AG04450 (cell line): ENCODE measurements at regions of chr15 and their contacts with region 1.

Region 1: GRCh38 chr15:90221246-90221900 is 12.4 kb downstream of the CIB1 start:
- DNase-seq: peak; percentile 53
- H3K4me3 ChIP-seq: no peak overlapping the region
- H3K27ac ChIP-seq: peak overlapping the region; percentile 39
- H3K27me3 ChIP-seq: no peaks in the 10 kb centered on the region
- CTCF ChIP-seq: peak; percentile 90

Region 2: GRCh38 chr15:90101969-90102890 is 119.1 kb before region 1 on chr15 and contains the start of gene IDH2:
- CTCF ChIA-PET with region 1: interaction called, 12 read pairs
- POLR2A ChIA-PET with region 1: interaction called, 5 read pairs
- DNase-seq: peak; percentile 42
- H3K4me3 ChIP-seq: peak within 1 kb of the TSS; percentile 73
- H3K27ac ChIP-seq: peak within 1 kb of the TSS; percentile 71
- H3K27me3 ChIP-seq: no peaks in the 10 kb centered on the region
- CTCF ChIP-seq: no peak
- polyA plus RNA-seq, gene IDH2: 84.2 and 108 TPM in 2 replicates

Region 3: DNA sequence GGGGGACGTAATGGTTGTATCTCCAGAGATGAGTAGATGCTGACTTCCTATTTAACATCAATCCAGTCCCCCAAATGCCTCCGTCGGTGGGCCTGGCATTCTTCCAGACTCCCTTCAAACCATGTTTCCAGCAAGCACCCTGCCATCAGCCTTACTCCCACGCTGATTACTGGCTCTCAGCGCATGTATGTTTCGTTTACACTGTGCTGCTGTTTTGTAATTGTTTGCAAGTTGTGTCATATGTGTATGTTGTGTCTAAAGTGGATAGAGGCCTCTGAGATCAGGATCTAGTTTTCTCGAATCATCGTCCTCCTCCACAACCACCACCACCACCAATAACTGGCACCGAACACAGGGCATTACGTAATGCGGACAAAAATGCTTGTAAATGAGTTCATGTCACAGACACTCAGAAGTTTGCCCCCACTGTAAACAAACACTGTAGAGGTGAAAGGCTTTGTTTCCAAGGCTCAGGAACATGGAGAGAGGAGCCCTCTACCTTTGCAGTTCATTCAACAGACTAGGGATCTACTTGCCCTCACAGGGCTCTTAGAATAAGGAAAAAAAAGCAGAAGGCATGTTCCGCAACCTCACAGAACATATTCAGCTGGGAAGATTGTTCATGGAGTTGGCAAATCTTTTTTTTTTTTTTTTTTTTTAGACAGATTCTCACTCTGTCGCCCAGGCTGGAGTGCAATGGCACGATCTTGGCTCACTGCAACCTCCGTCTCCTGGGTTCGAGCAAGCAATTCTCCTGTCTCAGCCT is 66.3 kb before region 1 on chr15:
- CTCF ChIA-PET with region 1: interaction called, 17 read pairs
- POLR2A ChIA-PET with region 1: interaction called, 6 read pairs
- DNase-seq: peak; percentile 84
- H3K4me3 ChIP-seq: no peak overlapping the region
- H3K27ac ChIP-seq: peak overlapping the region; percentile 58
- H3K27me3 ChIP-seq: no peaks in the 10 kb centered on the region
- CTCF ChIP-seq: no peak

Region 4: GRCh38 chr15:90201130-90201949 is 20.0 kb before region 1 on chr15 and contains the start of gene SEMA4B:
- CTCF ChIA-PET with region 1: interaction called, 17 read pairs
- POLR2A ChIA-PET with region 1: no interaction called
- DNase-seq: no peak
- H3K4me3 ChIP-seq: peak within 1 kb of the TSS; percentile 77
- H3K27ac ChIP-seq: no peak within 1 kb of the TSS
- H3K27me3 ChIP-seq: no peaks in the 10 kb centered on the region
- CTCF ChIP-seq: no peak
- polyA plus RNA-seq, gene SEMA4B: 13.5 and 17.9 TPM in 2 replicates

Region 5: DNA sequence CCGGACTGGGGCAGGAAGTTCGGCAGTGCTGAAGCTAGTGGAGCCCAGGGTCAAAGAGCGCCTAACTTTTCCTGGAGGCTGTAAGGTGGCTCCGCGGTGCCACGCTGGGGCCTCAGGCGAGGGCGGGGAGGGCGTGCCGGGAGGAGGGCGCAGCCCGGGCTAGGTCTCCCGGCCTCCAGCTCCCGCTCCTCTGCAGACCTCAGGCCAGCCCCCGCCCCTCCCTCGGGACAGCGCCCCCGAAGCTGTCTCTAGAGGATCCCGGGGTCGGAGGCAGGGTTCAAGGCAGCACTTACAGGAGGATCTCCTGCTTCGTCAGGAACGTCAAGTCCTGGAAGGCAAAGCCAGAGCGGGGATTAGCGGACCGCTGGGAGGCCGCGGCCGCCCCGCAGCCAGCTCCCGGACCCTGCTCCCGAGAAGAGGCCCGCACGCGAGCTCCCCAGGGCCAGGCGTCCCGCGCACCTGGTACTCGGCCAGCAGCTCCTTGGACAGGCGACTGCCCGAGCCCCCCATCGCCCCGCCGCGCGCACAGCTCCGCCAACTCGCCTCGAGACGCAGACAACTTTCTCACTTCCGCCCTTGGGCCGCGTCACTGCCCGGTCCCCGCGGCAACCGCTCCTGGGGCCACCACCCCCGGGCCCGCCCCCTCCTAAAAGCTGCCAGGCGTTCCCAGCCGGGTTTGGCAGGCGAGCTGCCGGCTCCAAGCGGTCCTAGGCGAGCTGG is 12.2 kb after region 1 on chr15 and contains the start of gene CIB1:
- CTCF ChIA-PET with region 1: interaction called, 36 read pairs
- POLR2A ChIA-PET with region 1: interaction called, 4 read pairs
- DNase-seq: peak; percentile 81
- H3K4me3 ChIP-seq: peak within 1 kb of the TSS; percentile 82
- H3K27ac ChIP-seq: peak within 1 kb of the TSS; percentile 65
- H3K27me3 ChIP-seq: no peaks in the 10 kb centered on the region
- CTCF ChIP-seq: no peak
- polyA plus RNA-seq, gene CIB1: 40.4 and 55.3 TPM in 2 replicates

Region 6: DNA sequence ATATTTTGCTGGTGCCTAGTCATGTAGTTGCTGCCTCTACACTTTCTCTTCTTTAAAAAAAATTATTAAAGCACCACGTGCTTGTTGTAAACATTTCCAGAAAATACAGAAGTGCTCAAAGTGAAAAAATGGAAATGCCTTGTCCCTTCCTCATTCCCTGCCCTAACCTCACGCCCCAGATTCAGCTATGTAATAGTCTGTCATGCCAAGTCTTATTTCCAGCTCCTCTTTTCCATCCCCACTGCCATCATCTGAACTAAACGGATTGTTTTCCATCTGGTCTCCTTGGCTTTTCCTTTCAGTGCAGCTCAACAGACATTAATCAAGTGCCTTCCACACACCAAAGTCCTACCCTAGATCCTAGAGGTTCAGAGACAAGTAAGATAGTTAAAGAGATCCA is 146.2 kb after region 1 on chr15:
- CTCF ChIA-PET with region 1: no interaction called
- POLR2A ChIA-PET with region 1: no interaction called
- DNase-seq: no peak
- H3K4me3 ChIP-seq: no peak overlapping the region
- H3K27ac ChIP-seq: no peak overlapping the region
- H3K27me3 ChIP-seq: no peaks in the 10 kb centered on the region
- CTCF ChIP-seq: no peak